Activated CD8-positive, alpha-beta T cell treated with anti-CD3 and anti-CD28 coated beads for 36 hours (primary cell): ENCODE measurements at regions of chr14 and their contacts with region 1.

Region 1: DNA sequence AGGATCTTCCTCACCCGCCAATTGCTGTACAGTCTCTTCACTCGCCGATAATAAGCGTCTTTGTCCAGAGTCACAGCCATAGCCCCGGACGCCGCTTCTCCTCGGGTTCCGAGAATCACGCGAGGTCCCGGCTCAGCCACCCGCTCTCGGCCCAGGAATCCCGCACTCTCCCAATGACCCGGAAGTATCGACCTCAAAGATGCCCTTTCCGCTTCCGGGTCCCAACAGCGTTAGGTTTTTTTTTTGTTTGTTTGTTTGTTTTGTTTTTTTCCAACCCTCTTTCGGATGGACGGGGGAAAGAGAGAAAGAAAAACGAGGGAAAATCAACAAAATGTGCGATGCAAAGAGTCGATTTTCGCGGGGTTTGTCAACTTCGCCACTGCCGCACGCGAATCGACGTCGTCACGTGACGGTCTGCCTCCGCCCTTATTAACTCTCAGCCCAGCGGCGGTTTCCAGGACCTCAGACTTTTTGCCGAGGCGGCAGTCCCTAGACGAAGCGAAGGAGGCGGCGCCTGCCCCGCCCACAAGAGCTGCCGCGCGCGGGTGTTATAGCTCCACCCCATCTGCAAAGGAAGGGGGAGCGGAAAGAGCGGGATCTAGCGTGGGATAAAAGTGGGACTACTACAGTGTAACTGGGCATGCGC is at the start of gene SUPT16H:
- DNase-seq: peak; percentile 98
- ATAC-seq: peak; percentile 90
- H3K4me3 Mint-ChIP-seq: peak within 1 kb of the TSS; percentile 86
- H3K27ac Mint-ChIP-seq: peak within 1 kb of the TSS; percentile 99
- H3K4me1 Mint-ChIP-seq: peaks cover 34% of the 10 kb centered on the region
- H3K27me3 Mint-ChIP-seq: no peaks in the 10 kb centered on the region
- CTCF ChIP-seq: no peak
- total RNA-seq, gene SUPT16H: 171 to 173 TPM

Region 2: DNA sequence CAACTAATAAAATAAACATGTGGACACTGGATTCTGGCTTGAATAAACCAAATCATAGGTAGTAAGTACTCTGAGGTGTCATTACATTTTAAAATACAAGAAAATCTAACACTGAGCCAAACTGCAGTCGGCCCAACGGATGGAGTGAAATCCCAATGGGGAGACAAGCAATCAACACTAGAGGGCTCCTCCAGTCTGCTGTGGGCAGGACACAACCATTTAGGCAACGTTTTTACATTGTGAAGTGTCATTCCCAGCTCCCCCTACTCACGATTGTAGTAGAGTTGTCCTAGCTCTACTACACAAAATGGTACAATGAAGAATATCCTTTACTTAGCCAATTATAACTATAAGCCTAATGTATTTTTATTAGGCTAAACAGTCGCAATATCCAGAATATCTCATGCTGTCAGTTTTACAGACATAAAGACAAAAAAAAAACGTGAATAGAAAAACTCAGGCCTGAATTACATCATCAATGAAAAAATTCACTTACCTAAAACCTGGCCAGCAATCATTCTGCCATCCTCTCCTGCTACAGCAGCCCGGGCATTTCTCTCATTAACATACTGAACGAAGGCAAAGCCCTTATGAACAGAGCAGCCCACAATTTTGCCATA is 150.4 kb before region 1 on chr14:
- CTCF ChIA-PET with region 1: interaction called, 3 read pairs
- POLR2A ChIA-PET with region 1: interaction called, 3 read pairs
- intact Hi-C with region 1: loop called (anchors 10 kb)
- DNase-seq: no peak
- ATAC-seq: no peak
- H3K4me3 Mint-ChIP-seq: peak overlapping the region; percentile 28
- H3K27ac Mint-ChIP-seq: peak overlapping the region; percentile 76
- H3K4me1 Mint-ChIP-seq: peaks cover 89% of the 10 kb centered on the region
- H3K27me3 Mint-ChIP-seq: no peaks in the 10 kb centered on the region
- CTCF ChIP-seq: peak; percentile 34